Right ventricle myocardium superior (tissue), 1 donor: ENCODE measurements at regions of chr1 and their contacts with region 1.

Region 1: GRCh38 chr1:160607011-160607671 is 27.8 kb upstream of the CD84 start:
- DNase-seq: no peak
- ATAC-seq: peak; percentile 89

Region 2: GRCh38 chr1:160428655-160429054 is 178.5 kb before region 1 on chr1:
- intact Hi-C with region 1: loop called (anchors 2 kb)
- DNase-seq: peak; percentile 65
- ATAC-seq: peak; percentile 81

Region 3: GRCh38 chr1:160675641-160676410 is 68.7 kb after region 1 on chr1:
- intact Hi-C with region 1: no loop called
- DNase-seq: peak; percentile 79
- ATAC-seq: peak; percentile 77

Region 4: GRCh38 chr1:161132410-161133219 is 525.5 kb after region 1 on chr1 and contains the start of gene DEDD:
- intact Hi-C with region 1: no loop called
- DNase-seq: peak; percentile 96
- ATAC-seq: peak; percentile 95
- total RNA-seq, gene DEDD: 26.6 TPM